ENCODE measurements at regions of chr9 and their contacts with region 1.

Region 1: DNA sequence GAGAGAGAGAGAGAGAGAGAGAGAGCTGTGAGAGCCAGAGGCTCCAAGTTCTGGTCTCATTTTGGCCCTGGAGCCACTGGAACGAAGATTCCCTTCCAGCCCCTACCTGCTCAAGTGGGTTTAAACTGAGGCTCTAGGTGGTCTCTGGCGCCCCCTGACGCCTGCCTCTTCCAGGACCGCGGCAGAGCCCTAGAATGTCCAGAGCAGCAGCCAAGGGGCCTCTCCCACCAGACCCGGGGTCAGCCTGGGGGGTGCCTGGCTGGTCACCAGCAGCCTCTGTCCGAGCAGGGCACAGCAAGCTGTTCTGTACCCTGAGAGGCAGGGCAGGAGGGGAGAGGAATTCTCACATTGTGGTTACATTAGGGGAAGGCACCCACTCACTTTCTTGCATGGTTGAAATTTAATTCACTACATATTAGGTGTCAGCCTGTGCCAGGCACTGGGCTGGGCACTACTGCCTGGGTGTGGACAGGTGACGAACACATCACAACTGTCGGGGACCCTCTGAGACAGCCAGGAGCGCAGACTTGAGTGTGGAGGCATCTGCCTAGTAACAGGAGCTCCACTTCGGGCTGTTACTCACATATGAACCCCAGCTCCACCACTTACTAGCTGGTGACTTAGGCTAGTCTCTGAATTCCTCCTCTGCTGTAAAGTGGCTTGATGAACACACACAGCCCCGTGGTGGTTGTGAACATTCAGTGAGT is 44.5 kb downstream of the AMBP start:
- DNase-seq: peak; percentile 78

Region 2: GRCh38 chr9:113682297-113682771 is 351.2 kb before region 1 on chr9:
- intact Hi-C with region 1: loop called (anchors 5 to 10 kb)
- DNase-seq: peak; percentile 89

Region 3: GRCh38 chr9:113720495-113720894 is 313.1 kb before region 1 on chr9:
- intact Hi-C with region 1: no loop called
- DNase-seq: no peak

Region 4: GRCh38 chr9:113998525-113999255 is 34.9 kb before region 1 on chr9:
- intact Hi-C with region 1: no loop called
- DNase-seq: peak; percentile 67

Measured in posterior vena cava (tissue), 2 donors.